ENCODE measurements at regions of chr18 and their contacts with region 1.

Region 1: DNA sequence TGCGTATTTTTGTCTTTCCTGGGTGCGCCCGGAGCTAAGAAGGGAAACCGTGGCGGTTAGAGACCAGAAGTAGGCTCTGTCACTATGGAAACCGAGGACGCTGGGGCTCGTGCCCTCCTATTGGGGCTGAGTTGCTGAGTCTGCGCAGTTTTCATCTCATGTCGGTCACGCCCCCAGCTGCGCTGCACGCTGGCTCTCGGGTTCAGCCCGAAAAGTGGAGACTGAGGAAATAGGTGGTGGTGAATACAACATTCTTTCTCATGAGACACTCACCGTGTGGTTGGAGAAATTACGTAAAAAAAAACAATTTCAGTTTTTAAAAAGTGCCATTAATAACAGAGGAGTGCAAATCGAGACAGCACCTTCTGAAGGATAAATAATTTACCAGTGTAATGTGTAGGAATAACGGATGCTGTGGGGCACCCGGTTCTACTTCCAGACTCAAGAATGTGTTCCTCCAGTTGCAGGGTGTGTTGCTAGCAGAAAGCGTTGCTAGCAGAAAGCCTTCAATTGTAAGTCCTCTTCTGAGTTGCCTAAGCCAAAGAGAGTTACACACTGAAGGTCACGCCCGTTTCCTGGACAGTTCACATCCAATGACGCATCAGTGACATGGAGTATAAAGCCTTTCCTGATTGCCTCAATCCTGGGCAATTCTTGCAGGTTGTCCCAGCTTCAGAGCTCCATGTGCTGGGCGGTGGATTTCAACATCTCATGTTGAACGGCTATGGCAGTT is 20.4 kb upstream of the CXXC1 start:
- DNase-seq: peak; percentile 94
- ATAC-seq: peak; percentile 98 to 100

Region 2: GRCh38 chr18:50429207-50429948 is 121.5 kb after region 1 on chr18:
- intact Hi-C with region 1: loop called in 1 of 2 experiments (anchors 10 kb)
- DNase-seq: no peak
- ATAC-seq: no peak

Measured in left cardiac atrium (tissue), 4 donors.